PC-9 (cell line): ENCODE measurements at regions of chr3 and their contacts with region 1.

Region 1: GRCh38 chr3:191136347-191136746 is 62.7 kb upstream of the OSTN start:
- DNase-seq: no peak
- H3K4me3 ChIP-seq: no peak overlapping the region
- H3K27ac ChIP-seq: no peak overlapping the region
- H3K4me1 ChIP-seq: no peaks in the 10 kb centered on the region; the same call in 1 of the 2 replicates
- H3K27me3 ChIP-seq: no peaks in the 10 kb centered on the region
- CTCF ChIP-seq: peak; percentile 73

Region 2: GRCh38 chr3:191376516-191377141 is 240.3 kb after region 1 on chr3:
- CTCF ChIA-PET with region 1: no interaction called
- POLR2A ChIA-PET with region 1: no interaction called
- intact Hi-C with region 1: loop called (anchors 5 kb)
- DNase-seq: peak in 1 of 2 experiments; percentile 26
- H3K4me3 ChIP-seq: no peak overlapping the region
- H3K27ac ChIP-seq: 0 out of 2 replicates have a peak overlapping the region, but pooled peaks have one; percentile 5
- H3K4me1 ChIP-seq: no peaks in the 10 kb centered on the region
- H3K27me3 ChIP-seq: no peaks in the 10 kb centered on the region
- CTCF ChIP-seq: no peak